ENCODE measurements at regions of chr13 and their contacts with region 1.

Region 1: GRCh38 chr13:74287724-74288169 is 153.5 kb upstream of the KLF12 start:
- DNase-seq: peak; percentile 71
- H3K4me3 Mint-ChIP-seq: peak overlapping the region; percentile 15
- H3K27ac Mint-ChIP-seq: peak overlapping the region; percentile 33
- H3K4me1 Mint-ChIP-seq: peaks cover 33% of the 10 kb centered on the region
- H3K27me3 Mint-ChIP-seq: peaks cover 20% of the 10 kb centered on the region

Region 2: GRCh38 chr13:74047939-74048600 is 239.7 kb before region 1 on chr13:
- intact Hi-C with region 1: loop called (anchors 5 kb)
- DNase-seq: no peak
- H3K4me3 Mint-ChIP-seq: no peak overlapping the region
- H3K27ac Mint-ChIP-seq: no peak overlapping the region
- H3K4me1 Mint-ChIP-seq: peaks cover 43% of the 10 kb centered on the region
- H3K27me3 Mint-ChIP-seq: no peaks in the 10 kb centered on the region

Region 3: DNA sequence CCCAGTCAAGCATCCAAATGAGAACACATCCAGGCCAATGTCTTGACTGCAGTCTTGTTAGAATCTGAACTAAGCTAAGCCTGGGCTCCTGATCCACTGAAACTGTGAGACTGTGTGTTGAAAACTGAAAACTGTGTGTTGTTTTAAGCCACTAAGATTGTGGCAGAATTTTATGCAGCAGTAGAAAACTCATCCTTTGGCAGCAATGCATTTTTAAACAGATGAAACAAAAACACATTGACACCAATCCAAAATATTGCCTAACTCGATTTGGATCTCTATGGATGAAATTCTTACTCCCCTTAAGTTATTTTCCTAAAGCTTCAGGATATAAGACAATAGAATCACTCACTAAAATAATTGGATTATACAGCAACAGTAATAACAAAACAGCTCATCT is 48.8 kb after region 1 on chr13:
- intact Hi-C with region 1: no loop called
- DNase-seq: no peak
- H3K4me3 Mint-ChIP-seq: no peak overlapping the region
- H3K27ac Mint-ChIP-seq: no peak overlapping the region
- H3K4me1 Mint-ChIP-seq: no peaks in the 10 kb centered on the region
- H3K27me3 Mint-ChIP-seq: no peaks in the 10 kb centered on the region

Measured in activated T-helper 2 cell treated with anti-CD3 and anti-CD28 coated beads, Interferon-gamma antibody, Interleukin-2, Interleukin-4, amounts not matched to agents 10 μg/mL and 5 μg/mL and 100 μg/mL, durations not matched to agents 14 hours and 24 hours and 36 hours (primary cell).